ENCODE measurements at regions of chr17 and their contacts with region 1.

Region 1: GRCh38 chr17:50177983-50178834 is 12.4 kb downstream of the SGCA start:
- DNase-seq: peak; percentile 93
- H3K4me3 ChIP-seq: no peak overlapping the region
- H3K27me3 ChIP-seq: no peaks in the 10 kb centered on the region
- CTCF ChIP-seq: peak; percentile 69

Region 2: GRCh38 chr17:50194934-50195865 is 17.0 kb after region 1 on chr17:
- CTCF ChIA-PET with region 1: interaction called, 12 read pairs
- POLR2A ChIA-PET with region 1: interaction called, 34 read pairs
- DNase-seq: no peak
- H3K4me3 ChIP-seq: peak overlapping the region; percentile 97
- H3K27me3 ChIP-seq: no peaks in the 10 kb centered on the region
- CTCF ChIP-seq: peak; percentile 59

Region 3: DNA sequence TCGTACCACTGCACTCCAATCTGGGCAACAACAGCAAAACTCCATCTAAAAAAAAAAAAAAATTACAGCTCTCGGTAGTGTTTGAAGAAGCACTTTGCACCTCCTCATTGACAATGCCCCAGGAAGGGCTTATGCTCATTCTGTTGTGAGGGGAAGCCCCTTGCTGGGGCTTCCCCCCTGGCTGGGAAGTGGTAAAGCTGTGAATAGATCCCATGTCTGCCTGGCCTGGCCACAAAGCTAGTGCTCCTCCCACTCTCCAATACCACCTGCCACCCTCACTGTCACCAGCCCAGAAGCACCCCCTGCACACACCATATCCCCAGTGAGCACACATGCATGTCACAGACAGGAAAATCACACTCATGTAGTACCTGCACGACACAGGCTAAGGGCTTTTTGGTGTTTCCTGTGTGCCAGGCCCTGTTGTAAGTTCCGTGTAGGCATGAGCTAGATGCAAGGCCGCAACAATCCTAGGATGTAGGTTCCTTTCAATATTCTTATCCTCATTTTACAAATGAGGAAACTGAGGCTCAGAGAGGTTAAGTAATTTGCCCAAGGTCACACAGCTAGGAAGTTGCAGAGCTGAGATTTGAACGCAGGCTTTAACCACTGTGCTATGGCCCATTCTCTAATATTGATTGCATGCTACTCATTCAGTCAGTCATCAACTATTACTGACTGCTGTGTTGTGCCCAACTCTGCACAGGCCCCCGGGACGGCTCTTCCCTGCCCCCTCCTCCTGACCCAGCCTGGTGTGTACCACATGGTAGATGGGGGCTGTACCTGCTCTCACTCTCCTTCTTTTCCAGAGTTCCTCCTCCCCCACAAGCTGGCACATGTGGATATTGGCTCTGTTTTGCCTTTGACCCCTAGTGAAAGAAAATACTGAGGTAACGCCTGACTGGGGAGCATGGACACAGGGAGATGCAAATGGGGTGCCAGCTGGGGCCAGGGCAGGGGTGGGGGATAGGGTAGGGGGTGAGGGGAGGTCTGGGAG is 35.1 kb after region 1 on chr17:
- CTCF ChIA-PET with region 1: interaction called, 18 read pairs
- POLR2A ChIA-PET with region 1: interaction called, 5 read pairs
- DNase-seq: no peak
- H3K4me3 ChIP-seq: no peak overlapping the region
- H3K27me3 ChIP-seq: no peaks in the 10 kb centered on the region
- CTCF ChIP-seq: no peak

Measured in BJ (cell line).